Mucosa of descending colon (tissue), 3 donors: ENCODE measurements at regions of chr7 and their contacts with region 1.

Region 1: GRCh38 chr7:129367700-129368388 is 66.4 kb upstream of the STRIP2 start:
- DNase-seq: peak; percentile 71 to 91 (median 84)
- ATAC-seq: peak; percentile 93
- H3K4me3 ChIP-seq: peak overlapping the region; percentile 2
- H3K4me1 ChIP-seq: peaks cover 25% of the 10 kb centered on the region
- CTCF ChIP-seq: peak; percentile 86

Region 2: GRCh38 chr7:129471402-129471827 is 103.6 kb after region 1 on chr7:
- intact Hi-C with region 1: loop called (anchors 5 to 10 kb)
- DNase-seq: no peak
- ATAC-seq: no peak
- H3K4me3 ChIP-seq: no peak overlapping the region
- H3K4me1 ChIP-seq: no peaks in the 10 kb centered on the region
- CTCF ChIP-seq: no peak